CD8-positive, alpha-beta memory T cell (primary cell): ENCODE measurements at regions of chr22 and their contacts with region 1.

Region 1: DNA sequence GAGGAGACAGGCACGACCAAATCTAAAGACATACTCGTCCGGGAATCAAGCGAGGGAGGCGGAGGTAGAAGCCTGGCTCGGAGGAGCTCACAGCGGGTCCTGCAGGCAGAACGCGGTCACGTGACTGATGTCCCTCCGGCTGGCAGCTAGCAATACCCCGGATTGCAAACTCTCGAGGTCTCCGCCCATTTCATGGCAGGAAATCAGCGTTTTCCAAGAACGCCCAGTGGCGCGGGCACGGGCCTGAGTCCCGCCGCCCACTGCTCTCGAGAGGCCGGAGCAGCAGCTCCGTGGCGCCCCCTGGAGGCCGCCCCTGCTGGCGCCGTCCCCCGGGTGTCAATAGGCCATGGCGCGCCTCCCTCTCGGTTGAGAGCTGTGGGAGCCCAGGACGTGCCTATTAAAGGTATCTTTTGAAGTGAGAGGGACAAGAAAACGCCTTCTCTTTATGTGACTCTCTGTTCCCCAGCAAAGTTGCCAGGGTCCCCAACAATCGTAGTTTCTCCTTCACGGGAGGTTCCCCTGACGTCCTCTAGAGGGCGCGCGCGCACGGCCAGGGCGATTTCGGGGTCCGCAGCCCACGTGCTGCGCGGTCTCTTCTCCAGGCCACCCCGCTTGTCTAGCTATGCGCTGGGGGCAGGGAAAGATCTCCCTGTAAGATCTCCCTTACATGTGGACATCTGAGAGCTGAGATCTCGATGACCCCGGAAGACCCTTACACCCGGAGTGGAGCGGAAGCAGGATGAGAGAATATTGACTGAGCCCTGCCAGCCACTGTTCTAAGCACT is 37.3 kb upstream of the RBFOX2 start:
- DNase-seq: peak; percentile 56 to 71 (median 57)
- H3K4me3 ChIP-seq: peak overlapping the region; percentile 61
- H3K4me3 Mint-ChIP-seq: peak overlapping the region; percentile 71 to 89 (median 86)
- H3K27ac ChIP-seq: peak overlapping the region; percentile 18
- H3K27ac Mint-ChIP-seq: peak overlapping the region in 7 of 8 donors; percentile 12 to 89 (median 60)
- H3K4me1 ChIP-seq: peaks cover 5% of the 10 kb centered on the region
- H3K4me1 Mint-ChIP-seq: peaks cover 8 to 11% (median 8%) of the 10 kb centered on the region in 3 donors
- H3K27me3 ChIP-seq: no peaks in the 10 kb centered on the region
- H3K27me3 Mint-ChIP-seq: no peaks in the 10 kb centered on the region

Region 2: DNA sequence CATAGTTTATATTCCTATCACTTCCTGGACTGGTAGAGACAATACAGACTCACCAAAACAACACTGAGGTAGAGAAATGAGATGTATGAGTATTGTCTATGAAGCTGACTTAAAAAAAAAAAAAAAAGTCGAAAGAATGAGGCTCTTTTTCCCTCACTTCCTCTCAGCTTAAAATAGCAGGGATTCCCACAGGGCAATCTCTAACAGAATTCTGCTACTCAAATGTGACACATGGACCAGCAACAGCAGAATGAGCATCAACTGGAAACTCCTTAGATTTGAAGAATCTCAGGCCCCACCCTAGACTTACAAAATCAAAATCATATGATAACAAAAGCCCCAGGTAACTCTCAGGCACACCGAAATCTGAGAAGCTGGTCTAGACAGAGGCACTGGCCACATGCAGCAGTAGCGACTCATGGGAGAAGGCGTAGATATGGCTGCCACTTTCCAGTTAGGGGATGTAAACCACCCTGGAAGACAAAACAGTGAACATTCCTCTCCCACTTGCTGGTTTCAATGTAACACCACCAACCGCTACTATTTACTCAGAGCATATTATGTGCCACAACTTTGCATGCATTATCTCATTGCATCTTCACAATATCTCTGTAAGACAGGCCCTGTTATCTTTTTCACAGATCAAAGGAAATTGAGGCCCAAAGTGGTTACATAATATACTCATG is 165.3 kb before region 1 on chr22:
- CTCF ChIA-PET with region 1: no interaction called
- POLR2A ChIA-PET with region 1: no interaction called
- DNase-seq: peak in 1 of 5 donors; percentile 9
- H3K4me3 ChIP-seq: no peak overlapping the region
- H3K4me3 Mint-ChIP-seq: peak overlapping the region in 4 of 7 donors; percentile 4 to 46 (median 30)
- H3K27ac ChIP-seq: no peak overlapping the region
- H3K27ac Mint-ChIP-seq: peak overlapping the region; percentile 10 to 78 (median 56)
- H3K4me1 ChIP-seq: peaks cover 11% of the 10 kb centered on the region
- H3K4me1 Mint-ChIP-seq: peaks cover 12 to 23% (median 20%) of the 10 kb centered on the region in 3 donors
- H3K27me3 ChIP-seq: no peaks in the 10 kb centered on the region
- H3K27me3 Mint-ChIP-seq: peaks cover 2 to 14% of the 10 kb centered on the region in 2 donors

Region 3: GRCh38 chr22:35938226-35938625 is 127.7 kb before region 1 on chr22:
- CTCF ChIA-PET with region 1: no interaction called
- POLR2A ChIA-PET with region 1: no interaction called
- DNase-seq: no peak
- H3K4me3 ChIP-seq: no peak overlapping the region
- H3K4me3 Mint-ChIP-seq: no peak overlapping the region
- H3K27ac ChIP-seq: no peak overlapping the region
- H3K27ac Mint-ChIP-seq: no peak overlapping the region
- H3K4me1 ChIP-seq: no peaks in the 10 kb centered on the region
- H3K4me1 Mint-ChIP-seq: no peaks in the 10 kb centered on the region
- H3K27me3 ChIP-seq: no peaks in the 10 kb centered on the region
- H3K27me3 Mint-ChIP-seq: peaks cover 2 to 48% of the 10 kb centered on the region in 2 donors

Region 4: DNA sequence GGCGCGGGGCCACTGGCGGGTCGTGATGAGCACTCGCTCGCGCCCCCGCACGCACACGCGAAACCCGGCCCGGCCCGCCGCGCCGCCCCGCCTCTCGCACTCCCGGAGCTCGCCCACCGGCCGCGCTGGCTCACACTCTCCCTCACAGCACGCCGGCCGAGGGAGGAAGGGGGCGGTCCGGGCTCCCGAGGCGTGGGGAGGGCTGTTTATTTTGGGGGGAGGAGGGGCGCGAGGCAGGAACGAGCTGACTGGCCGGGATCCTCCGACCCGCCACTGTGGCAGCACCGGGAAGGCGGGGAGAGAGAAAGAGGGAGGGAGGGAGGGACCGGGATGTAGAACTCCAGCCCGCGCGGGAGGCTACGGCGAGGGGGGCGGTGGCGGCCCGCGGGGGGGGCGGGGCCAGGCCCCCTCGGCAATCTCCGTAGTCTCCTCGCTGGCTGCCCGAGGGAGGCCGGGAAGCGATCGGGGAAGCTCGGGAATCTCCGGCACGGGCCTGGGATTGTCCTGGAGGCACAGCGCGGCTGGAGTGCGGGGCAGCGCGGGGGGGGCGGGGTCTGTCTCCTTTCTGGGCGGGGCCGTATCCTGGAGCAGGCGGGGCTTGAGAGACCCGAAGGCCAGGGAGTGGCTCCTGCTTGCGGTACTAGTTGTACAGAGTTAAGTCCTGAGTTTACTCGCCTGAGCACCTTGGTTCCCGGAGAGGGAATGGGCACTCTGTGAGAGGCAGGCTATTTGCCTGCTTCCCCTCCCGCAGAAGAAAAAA is 37.1 kb before region 1 on chr22 and contains the start of gene RBFOX2:
- CTCF ChIA-PET with region 1: interaction called, 17 read pairs
- POLR2A ChIA-PET with region 1: no interaction called
- DNase-seq: peak; percentile 39 to 73 (median 54)
- H3K4me3 ChIP-seq: peak within 1 kb of the TSS; percentile 40
- H3K4me3 Mint-ChIP-seq: peak within 1 kb of the TSS; percentile 87 to 94 (median 92)
- H3K27ac ChIP-seq: peak within 1 kb of the TSS; percentile 3
- H3K27ac Mint-ChIP-seq: peak within 1 kb of the TSS; percentile 20 to 93 (median 79)
- H3K4me1 ChIP-seq: peaks cover 21% of the 10 kb centered on the region
- H3K4me1 Mint-ChIP-seq: peaks cover 15 to 20% (median 18%) of the 10 kb centered on the region in 3 donors
- H3K27me3 ChIP-seq: no peaks in the 10 kb centered on the region
- H3K27me3 Mint-ChIP-seq: peaks cover 9 to 12% of the 10 kb centered on the region in 2 donors
- total RNA-seq, gene RBFOX2: 6.1 to 7.1 TPM

Region 5: DNA sequence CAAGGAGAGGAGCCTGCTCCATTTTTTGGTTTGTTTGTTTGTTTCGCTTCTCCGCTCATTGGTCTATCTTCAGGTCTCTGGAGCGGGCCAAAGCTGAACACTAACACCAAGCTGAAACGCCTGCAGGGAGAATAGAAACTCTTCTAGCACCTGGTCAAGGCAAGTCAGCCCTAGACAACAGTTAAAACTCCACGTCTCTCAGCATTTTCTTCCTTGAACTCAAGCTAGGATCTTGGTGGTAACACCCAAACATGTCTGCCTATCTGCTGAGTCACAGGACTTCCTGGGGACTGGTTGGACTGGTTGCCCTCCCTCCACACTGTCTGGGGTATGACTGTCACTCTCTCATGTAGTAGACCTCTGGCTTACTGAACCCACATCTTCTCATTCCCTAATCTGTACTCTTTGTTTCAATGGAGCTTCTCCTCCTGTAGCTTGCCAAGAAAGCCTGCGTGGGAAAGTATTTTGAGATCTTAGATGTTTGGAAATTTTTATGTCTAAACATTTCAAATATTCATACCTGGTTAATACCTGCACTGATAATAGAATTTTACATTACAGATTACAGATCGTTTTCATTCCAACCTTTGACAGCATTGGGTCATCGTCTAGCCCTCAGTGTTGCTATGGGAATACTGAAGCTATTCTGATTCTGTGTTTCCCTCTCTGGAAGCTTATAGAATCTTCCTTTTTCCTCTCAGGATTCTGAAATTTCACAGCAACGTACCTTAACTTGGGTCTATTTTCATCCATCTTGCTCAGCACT is 13.3 kb before region 1 on chr22:
- CTCF ChIA-PET with region 1: interaction called, 24 read pairs
- POLR2A ChIA-PET with region 1: no interaction called
- DNase-seq: no peak
- H3K4me3 ChIP-seq: no peak overlapping the region
- H3K4me3 Mint-ChIP-seq: no peak overlapping the region
- H3K27ac ChIP-seq: peak overlapping the region; percentile 49
- H3K27ac Mint-ChIP-seq: peak overlapping the region in 1 of 8 donors; percentile 81
- H3K4me1 ChIP-seq: no peaks in the 10 kb centered on the region
- H3K4me1 Mint-ChIP-seq: peaks cover 0 to 11% (median 7%) of the 10 kb centered on the region in 3 donors
- H3K27me3 ChIP-seq: no peaks in the 10 kb centered on the region
- H3K27me3 Mint-ChIP-seq: peaks cover 0 to 21% of the 10 kb centered on the region in 2 donors

Region 6: DNA sequence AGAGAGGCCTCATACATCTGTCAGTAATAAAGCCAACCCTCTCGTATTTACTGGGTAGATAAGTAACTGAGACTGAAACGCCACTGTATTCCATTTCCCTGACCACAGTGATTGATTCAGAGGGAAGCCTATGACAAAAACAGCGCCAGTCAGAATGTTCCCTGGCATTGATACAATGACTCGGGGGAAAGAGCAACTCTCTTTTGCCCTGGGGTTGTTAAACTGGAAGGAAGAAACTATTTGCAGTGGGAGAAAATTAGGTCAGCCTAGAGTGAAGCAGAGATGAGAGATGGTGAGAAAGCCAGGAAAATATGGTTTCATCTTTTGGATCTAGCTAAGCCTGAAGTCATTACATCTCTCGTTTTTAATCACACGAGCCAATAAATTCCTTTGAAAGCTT is 11.3 kb after region 1 on chr22:
- CTCF ChIA-PET with region 1: interaction called, 27 read pairs
- POLR2A ChIA-PET with region 1: no interaction called
- DNase-seq: no peak
- H3K4me3 ChIP-seq: no peak overlapping the region
- H3K4me3 Mint-ChIP-seq: no peak overlapping the region
- H3K27ac ChIP-seq: no peak overlapping the region
- H3K27ac Mint-ChIP-seq: no peak overlapping the region
- H3K4me1 ChIP-seq: no peaks in the 10 kb centered on the region
- H3K4me1 Mint-ChIP-seq: peaks cover 0 to 3% (median 0%) of the 10 kb centered on the region in 3 donors
- H3K27me3 ChIP-seq: no peaks in the 10 kb centered on the region
- H3K27me3 Mint-ChIP-seq: no peaks in the 10 kb centered on the region

Region 7: DNA sequence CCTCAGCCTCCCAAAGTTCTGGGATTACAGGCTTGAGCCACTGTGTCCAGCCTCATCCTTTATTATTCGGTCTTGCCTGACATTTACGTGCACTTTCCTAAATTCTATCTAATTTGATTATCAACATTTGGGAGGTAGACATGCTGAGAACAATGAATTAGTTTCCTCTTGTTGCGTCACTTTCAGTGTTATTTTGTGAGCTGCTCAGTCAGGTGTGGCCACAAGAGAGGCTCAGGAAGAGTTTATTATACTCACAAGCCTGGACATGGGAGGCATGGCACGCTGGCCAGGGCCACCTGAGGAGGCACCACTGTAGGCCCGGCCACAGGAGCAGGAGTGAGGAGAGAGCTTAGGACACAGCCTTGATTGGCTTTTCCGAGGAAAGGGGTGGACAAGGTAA is 22.3 kb after region 1 on chr22:
- CTCF ChIA-PET with region 1: interaction called, 13 read pairs
- POLR2A ChIA-PET with region 1: no interaction called
- DNase-seq: no peak
- H3K4me3 ChIP-seq: no peak overlapping the region
- H3K4me3 Mint-ChIP-seq: no peak overlapping the region
- H3K27ac ChIP-seq: no peak overlapping the region
- H3K27ac Mint-ChIP-seq: no peak overlapping the region
- H3K4me1 ChIP-seq: no peaks in the 10 kb centered on the region
- H3K4me1 Mint-ChIP-seq: no peaks in the 10 kb centered on the region
- H3K27me3 ChIP-seq: no peaks in the 10 kb centered on the region
- H3K27me3 Mint-ChIP-seq: peaks cover 0 to 4% of the 10 kb centered on the region in 2 donors

Region 8: GRCh38 chr22:36166518-36167220 is 100.7 kb after region 1 on chr22:
- CTCF ChIA-PET with region 1: no interaction called
- POLR2A ChIA-PET with region 1: no interaction called
- DNase-seq: peak; percentile 39 to 85 (median 74)
- H3K4me3 ChIP-seq: no peak overlapping the region
- H3K4me3 Mint-ChIP-seq: peak overlapping the region; percentile 14 to 95 (median 56)
- H3K27ac ChIP-seq: peak overlapping the region; percentile 15
- H3K27ac Mint-ChIP-seq: peak overlapping the region; percentile 71 to 99 (median 98)
- H3K4me1 ChIP-seq: peaks cover 36% of the 10 kb centered on the region
- H3K4me1 Mint-ChIP-seq: peaks cover 58 to 66% (median 61%) of the 10 kb centered on the region in 3 donors
- H3K27me3 ChIP-seq: no peaks in the 10 kb centered on the region
- H3K27me3 Mint-ChIP-seq: no peaks in the 10 kb centered on the region

Region 9: GRCh38 chr22:36180038-36180880 is 114.3 kb after region 1 on chr22:
- CTCF ChIA-PET with region 1: interaction called, 12 read pairs
- POLR2A ChIA-PET with region 1: no interaction called
- DNase-seq: peak; percentile 71 to 90 (median 80)
- H3K4me3 ChIP-seq: no peak overlapping the region
- H3K4me3 Mint-ChIP-seq: no peak overlapping the region
- H3K27ac ChIP-seq: no peak overlapping the region
- H3K27ac Mint-ChIP-seq: peak overlapping the region in 2 of 8 donors; percentile 3 to 48
- H3K4me1 ChIP-seq: peaks cover 3% of the 10 kb centered on the region
- H3K4me1 Mint-ChIP-seq: peaks cover 4 to 7% (median 5%) of the 10 kb centered on the region in 3 donors
- H3K27me3 ChIP-seq: no peaks in the 10 kb centered on the region
- H3K27me3 Mint-ChIP-seq: no peaks in the 10 kb centered on the region

Region 10: DNA sequence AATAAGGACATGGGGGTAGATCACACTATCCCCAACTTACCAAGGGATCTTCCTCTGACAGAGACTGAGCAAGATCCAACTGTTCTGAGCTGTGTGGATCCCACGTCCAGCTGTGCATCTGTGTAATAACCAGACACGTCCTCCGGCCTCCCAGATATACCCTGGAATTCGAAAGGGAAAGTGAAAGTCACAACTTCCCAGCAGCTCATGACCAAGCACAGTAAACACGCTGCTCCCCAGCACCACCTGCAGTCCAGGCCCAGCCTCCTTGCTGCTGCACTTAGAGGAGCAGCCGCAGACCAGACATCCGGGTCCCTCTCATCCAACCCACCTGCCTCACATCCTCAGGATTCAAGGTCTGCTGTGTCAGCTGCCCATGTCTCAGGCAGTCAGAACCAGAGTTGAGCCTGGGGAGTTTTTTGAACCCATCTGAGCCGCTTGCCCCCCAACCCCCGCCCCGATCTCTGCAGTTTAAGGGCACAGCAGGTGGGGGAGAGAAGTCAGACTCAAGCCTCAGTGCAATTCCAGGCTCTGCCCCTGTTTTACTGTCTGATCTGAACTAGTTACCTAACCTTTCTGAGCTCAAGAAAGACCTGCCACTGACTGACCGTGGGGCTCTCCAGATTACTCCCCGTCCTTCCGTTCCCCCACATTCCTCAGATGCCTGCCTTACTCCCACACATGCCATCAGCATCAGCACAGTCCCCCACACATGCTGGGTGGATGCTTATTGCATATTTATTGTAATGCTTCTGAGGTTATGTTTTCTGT is 173.6 kb after region 1 on chr22 and contains the start of gene APOL2:
- CTCF ChIA-PET with region 1: interaction called, 13 read pairs
- POLR2A ChIA-PET with region 1: no interaction called
- DNase-seq: peak; percentile 80 to 87 (median 82)
- H3K4me3 ChIP-seq: peak within 1 kb of the TSS; percentile 91
- H3K4me3 Mint-ChIP-seq: peak within 1 kb of the TSS; percentile 96 to 100 (median 100)
- H3K27ac ChIP-seq: peak within 1 kb of the TSS; percentile 82
- H3K27ac Mint-ChIP-seq: peak within 1 kb of the TSS; percentile 90 to 100 (median 98)
- H3K4me1 ChIP-seq: peaks cover 37% of the 10 kb centered on the region
- H3K4me1 Mint-ChIP-seq: peaks cover 49 to 56% (median 50%) of the 10 kb centered on the region in 3 donors
- H3K27me3 ChIP-seq: no peaks in the 10 kb centered on the region
- H3K27me3 Mint-ChIP-seq: peaks cover 0 to 1% of the 10 kb centered on the region in 2 donors
- total RNA-seq, gene APOL2: 59.0 to 62.8 TPM